Activated T-helper 1 cell treated with anti-CD3 and anti-CD28 coated beads, Interleukin-12 subunit alpha, Interleukin-12 subunit beta, Interleukin-2, Interleukin-4 antibody, amounts not matched to agents 30 ng/mL and 10 ng/mL and 1 ng/mL, durations not matched to agents 14 hours and 24 hours and 36 hours (primary cell): ENCODE measurements at regions of chr4 and their contacts with region 1.

Region 1: DNA sequence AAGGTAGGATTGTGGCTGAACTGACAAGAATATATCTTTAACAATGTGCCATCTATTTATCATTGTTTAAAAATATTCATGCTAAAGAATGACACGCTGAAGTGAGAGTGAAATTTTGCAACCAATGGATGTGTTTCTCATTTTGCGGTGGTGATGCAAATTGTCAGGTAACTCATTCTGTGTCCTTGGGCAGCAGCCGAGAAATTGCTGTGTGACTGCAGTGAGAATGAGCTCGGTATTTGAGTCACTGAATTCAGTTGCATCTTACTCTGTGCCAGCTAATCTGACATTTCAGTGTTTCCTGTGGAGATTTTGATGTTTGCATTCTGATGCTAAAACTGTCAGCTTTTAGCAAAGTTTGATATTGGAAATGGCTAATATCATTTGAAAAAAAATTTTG is 28.1 kb downstream of the MCUB start:
- DNase-seq: peak; percentile 22
- H3K4me3 Mint-ChIP-seq: no peak overlapping the region
- H3K27ac Mint-ChIP-seq: peak overlapping the region; percentile 1
- H3K4me1 Mint-ChIP-seq: peaks cover 57% of the 10 kb centered on the region
- H3K27me3 Mint-ChIP-seq: no peaks in the 10 kb centered on the region

Region 2: DNA sequence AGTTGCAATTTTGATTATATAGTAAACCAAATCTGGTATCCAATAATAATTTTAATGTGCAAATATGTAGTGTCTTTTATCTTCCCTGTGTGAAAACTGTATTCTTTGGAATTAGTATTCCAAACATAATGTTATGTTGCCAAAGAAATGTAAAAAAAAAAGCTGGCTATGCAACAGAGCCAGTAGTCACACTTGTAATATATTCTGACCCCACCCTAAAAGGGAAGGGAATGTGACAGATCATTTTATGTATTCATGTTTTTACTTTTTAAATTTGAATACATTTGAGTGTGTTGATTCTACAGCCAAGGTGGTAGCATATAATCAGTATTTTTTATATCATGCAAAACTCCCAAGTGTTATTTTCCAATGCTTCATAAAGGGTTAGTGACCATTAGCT is 56.0 kb before region 1 on chr4:
- intact Hi-C with region 1: no loop called
- DNase-seq: no peak
- H3K4me3 Mint-ChIP-seq: no peak overlapping the region
- H3K27ac Mint-ChIP-seq: no peak overlapping the region
- H3K4me1 Mint-ChIP-seq: no peaks in the 10 kb centered on the region
- H3K27me3 Mint-ChIP-seq: no peaks in the 10 kb centered on the region

Region 3: DNA sequence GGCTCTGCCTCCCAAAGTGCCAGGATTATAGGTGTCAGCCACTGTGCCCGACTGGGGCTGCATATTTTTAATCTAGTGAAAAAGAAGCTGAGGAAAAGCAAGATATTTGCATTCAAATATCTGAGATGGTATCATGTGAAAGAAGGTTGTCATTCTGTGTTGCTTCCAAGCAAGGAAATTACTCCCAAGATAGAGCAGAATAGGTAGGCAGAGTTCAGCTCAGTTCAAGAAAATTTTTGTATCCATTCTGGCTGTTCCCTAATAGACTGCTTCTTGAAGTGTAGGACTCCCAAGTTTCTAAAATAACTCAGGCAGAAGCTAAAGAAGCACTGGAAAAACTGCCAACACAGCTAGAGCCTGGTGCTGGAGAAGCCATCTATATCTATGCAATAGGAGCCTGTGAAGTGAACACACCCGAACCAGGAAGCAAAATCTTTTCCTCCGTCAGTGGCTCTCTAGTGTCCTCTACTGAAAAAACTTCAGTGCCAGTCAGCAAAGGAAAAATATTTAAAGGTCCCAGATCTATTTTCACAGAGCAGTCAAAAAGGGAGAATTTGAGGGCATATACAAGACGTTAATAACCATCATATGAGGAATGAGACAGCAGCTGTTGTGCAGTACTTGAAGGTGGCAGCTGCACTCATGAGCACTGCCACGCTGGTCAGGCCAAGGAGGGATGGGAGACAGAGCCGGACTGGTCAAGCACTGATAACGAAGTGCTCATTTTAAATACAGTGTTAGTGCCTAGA is 13.9 kb before region 1 on chr4:
- intact Hi-C with region 1: loop called (anchors 2 kb)
- DNase-seq: no peak
- H3K4me3 Mint-ChIP-seq: peak overlapping the region; percentile 35
- H3K27ac Mint-ChIP-seq: no peak overlapping the region
- H3K4me1 Mint-ChIP-seq: peaks cover 42% of the 10 kb centered on the region
- H3K27me3 Mint-ChIP-seq: no peaks in the 10 kb centered on the region

Region 4: GRCh38 chr4:109648266-109648996 is 60.3 kb after region 1 on chr4:
- intact Hi-C with region 1: loop called (anchors 2 kb)
- DNase-seq: no peak
- H3K4me3 Mint-ChIP-seq: peak overlapping the region; percentile 69
- H3K27ac Mint-ChIP-seq: peak overlapping the region; percentile 84
- H3K4me1 Mint-ChIP-seq: peaks cover 8% of the 10 kb centered on the region
- H3K27me3 Mint-ChIP-seq: no peaks in the 10 kb centered on the region